ENCODE measurements at regions of chr19 and their contacts with region 1.

Region 1: DNA sequence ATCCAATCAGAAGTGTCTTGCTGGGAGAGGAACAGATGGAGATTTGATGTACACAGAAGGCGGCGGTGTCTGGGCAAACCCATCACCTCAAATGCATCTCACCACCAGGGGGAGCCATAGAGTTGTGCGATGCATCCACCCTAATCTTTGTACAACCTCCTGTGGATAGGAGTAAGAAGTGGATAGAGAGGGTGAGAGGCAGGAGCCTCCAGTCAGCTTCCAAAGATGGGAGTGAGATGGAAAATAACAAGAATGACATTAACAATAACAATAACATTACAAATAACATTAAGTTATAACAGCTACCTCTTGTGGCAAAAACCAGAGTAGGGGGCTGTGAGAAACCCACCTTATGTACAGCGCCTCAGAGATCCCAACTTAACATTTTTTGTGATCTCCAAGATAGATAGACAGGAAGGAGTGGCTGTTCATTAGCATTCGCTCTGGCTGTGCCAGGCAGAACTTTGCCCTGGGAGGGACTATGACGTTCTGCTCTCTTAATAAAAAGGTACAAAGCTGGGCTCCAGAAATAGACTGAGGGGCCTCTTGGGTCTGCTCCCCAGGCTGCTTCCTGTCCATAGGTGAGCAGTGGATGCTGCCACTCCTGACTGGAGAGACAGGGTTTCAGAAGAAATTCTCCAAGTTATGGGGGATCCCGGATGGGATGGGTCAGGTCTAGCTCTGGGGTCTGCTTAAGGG is 5.2 kb upstream of the CEACAM18 start:
- DNase-seq: peak in 3 of 4 donors; percentile 32 to 70 (median 64)
- ATAC-seq: peak; percentile 93
- H3K4me3 ChIP-seq: no peak overlapping the region
- H3K27ac ChIP-seq: no peak overlapping the region
- H3K4me1 ChIP-seq: peaks cover 0 to 8% of the 10 kb centered on the region in 2 donors
- H3K27me3 ChIP-seq: peaks cover 0 to 36% of the 10 kb centered on the region in 2 donors
- CTCF ChIP-seq: peak; percentile 81 to 96

Region 2: GRCh38 chr19:51327066-51328001 is 145.8 kb before region 1 on chr19:
- intact Hi-C with region 1: no loop called
- DNase-seq: peak in 3 of 4 donors; percentile 32 to 84 (median 58)
- ATAC-seq: peak; percentile 87
- H3K4me3 ChIP-seq: peak overlapping the region in 1 of 2 donors; percentile 14
- H3K27ac ChIP-seq: no peak overlapping the region
- H3K4me1 ChIP-seq: peaks cover 4 to 12% of the 10 kb centered on the region in 2 donors
- H3K27me3 ChIP-seq: peaks cover 22 to 79% of the 10 kb centered on the region in 2 donors
- CTCF ChIP-seq: no peak

Region 3: GRCh38 chr19:51431124-51431523 is 42.0 kb before region 1 on chr19:
- intact Hi-C with region 1: no loop called
- DNase-seq: no peak
- ATAC-seq: peak; percentile 25
- H3K4me3 ChIP-seq: no peak overlapping the region
- H3K27ac ChIP-seq: peak overlapping the region in 1 of 2 donors; percentile 88
- H3K4me1 ChIP-seq: peaks cover 0 to 60% of the 10 kb centered on the region in 2 donors
- H3K27me3 ChIP-seq: peaks cover 0 to 18% of the 10 kb centered on the region in 2 donors
- CTCF ChIP-seq: no peak

Region 4: DNA sequence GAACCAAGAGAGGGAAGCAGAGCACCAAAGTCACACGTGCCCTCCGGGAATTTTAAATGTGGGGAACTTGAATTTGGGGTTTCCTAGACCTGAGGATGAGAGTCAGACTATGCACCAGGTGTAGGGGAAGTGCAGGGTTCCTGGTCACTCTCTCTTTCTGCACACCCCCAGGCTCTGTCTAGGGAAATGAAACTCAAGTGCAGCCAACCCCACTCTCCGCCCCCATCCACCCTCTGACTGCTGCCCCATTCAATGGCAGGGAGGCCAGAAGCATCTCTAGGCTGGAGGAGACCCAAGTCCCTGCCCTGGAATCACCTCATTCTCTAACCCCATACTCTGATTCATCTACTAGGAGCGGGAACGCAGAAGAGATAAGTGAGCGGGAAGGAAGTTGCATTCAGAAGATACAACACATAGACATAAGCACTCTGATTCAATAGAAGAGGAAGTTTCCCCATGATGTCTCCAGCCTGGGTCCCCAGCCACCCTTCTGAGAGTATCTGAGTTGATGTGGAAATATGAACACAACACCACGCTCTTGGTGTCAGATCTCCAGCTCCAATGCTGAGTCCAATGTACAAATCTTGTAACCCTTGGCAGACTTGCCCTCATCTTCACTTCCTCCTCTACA is 178.2 kb after region 1 on chr19:
- intact Hi-C with region 1: loop called in 1 of 2 experiments (anchors 10 kb)
- DNase-seq: peak in 1 of 4 donors; percentile 53
- ATAC-seq: peak; percentile 83
- H3K4me3 ChIP-seq: no peak overlapping the region
- H3K27ac ChIP-seq: peak overlapping the region in 1 of 2 donors; percentile 76
- H3K4me1 ChIP-seq: peaks cover 0 to 47% of the 10 kb centered on the region in 2 donors
- H3K27me3 ChIP-seq: peaks cover 0 to 25% of the 10 kb centered on the region in 2 donors
- CTCF ChIP-seq: no peak

Measured in left lung (tissue), 14 donors.